ENCODE measurements at regions of chr12 and their contacts with region 1.

Region 1: GRCh38 chr12:31682136-31682962 is 22.9 kb downstream of the ETFBKMT start:
- DNase-seq: peak; percentile 59 to 81 (median 71)
- H3K4me3 ChIP-seq: no peak overlapping the region
- H3K27ac ChIP-seq: no peak overlapping the region
- H3K4me1 ChIP-seq: no peaks in the 10 kb centered on the region
- H3K27me3 ChIP-seq: no peaks in the 10 kb centered on the region
- CTCF ChIP-seq: peak; percentile 26 to 87 (median 72)
- POLR2A ChIP-seq: no peak

Region 2: GRCh38 chr12:31578632-31579031 is 103.7 kb before region 1 on chr12:
- intact Hi-C with region 1: no loop called
- DNase-seq: peak; percentile 39 to 80 (median 72)
- H3K4me3 ChIP-seq: no peak overlapping the region
- H3K27ac ChIP-seq: peak overlapping the region in 2 of 5 donors; percentile 1 to 29
- H3K4me1 ChIP-seq: peaks cover 0 to 25% of the 10 kb centered on the region in 2 donors
- H3K27me3 ChIP-seq: no peaks in the 10 kb centered on the region
- CTCF ChIP-seq: no peak
- POLR2A ChIP-seq: no peak

Region 3: GRCh38 chr12:31618228-31619025 is 63.9 kb before region 1 on chr12:
- intact Hi-C with region 1: no loop called
- DNase-seq: peak in 3 of 7 donors; percentile 12 to 31 (median 25)
- H3K4me3 ChIP-seq: no peak overlapping the region
- H3K27ac ChIP-seq: peak overlapping the region in 1 of 5 donors; percentile 32
- H3K4me1 ChIP-seq: no peaks in the 10 kb centered on the region
- H3K27me3 ChIP-seq: no peaks in the 10 kb centered on the region
- CTCF ChIP-seq: no peak
- POLR2A ChIP-seq: no peak

Region 4: DNA sequence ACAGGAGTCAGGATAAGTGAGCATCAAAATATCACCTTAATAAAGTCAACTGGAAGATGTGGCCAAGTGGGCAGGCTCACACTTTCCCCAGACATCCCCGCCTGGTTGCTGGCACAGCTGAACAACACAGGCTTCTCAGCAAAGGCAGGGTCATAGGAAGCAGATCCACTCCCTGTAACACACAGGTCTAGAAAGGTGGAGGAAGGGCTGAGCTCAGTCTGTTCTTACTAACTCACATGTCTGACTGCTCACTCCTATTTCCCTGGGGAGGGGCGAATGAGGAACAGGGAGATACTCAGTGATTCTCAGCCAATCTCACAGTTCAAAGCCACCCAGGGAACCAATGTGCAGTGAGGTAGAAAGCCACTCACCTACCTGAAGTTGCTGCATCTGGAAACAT is 91.5 kb after region 1 on chr12:
- intact Hi-C with region 1: loop called in 1 of 2 experiments (anchors 10 kb)
- DNase-seq: no peak
- H3K4me3 ChIP-seq: no peak overlapping the region
- H3K27ac ChIP-seq: no peak overlapping the region
- H3K4me1 ChIP-seq: peaks cover 0 to 7% of the 10 kb centered on the region in 2 donors
- H3K27me3 ChIP-seq: no peaks in the 10 kb centered on the region
- CTCF ChIP-seq: no peak
- POLR2A ChIP-seq: no peak

Region 5: DNA sequence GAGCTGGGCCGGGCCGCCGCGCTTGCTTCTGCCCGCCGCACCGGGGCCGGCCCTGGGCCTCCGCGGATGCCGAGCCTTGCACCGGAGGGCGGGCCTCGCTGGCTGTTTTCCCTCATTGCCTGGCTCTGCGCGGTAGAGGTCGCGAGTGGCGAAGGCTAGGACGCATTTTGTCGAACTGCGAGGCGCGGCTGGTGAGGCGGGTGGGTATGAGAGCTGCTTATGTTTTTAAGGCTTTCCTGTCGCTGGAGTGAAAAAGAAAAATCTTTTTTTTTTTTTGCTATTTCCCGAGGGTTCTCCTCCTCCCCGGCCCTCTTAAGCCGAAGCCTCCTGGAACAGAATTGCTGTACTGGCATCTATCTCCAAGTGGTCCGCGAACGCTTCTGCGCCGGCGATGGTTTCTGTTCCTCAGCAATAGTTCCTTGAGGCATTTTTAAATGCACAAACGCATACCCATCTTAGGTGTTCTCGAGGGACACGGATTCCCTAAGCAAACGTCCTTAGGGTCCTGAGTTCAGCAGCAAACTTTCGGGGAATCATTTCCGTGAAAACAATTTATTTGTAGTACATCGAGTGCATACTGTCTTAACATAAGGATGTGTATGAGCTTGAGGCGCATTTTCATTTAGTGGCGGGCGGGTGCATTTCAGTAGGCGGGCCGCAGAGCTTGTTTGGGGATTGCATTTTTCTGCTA is 277.5 kb after region 1 on chr12:
- intact Hi-C with region 1: loop called in 1 of 2 experiments (anchors 10 kb)
- DNase-seq: peak; percentile 57 to 77 (median 66)
- H3K4me3 ChIP-seq: peak overlapping the region in 3 of 4 donors; percentile 30 to 92 (median 92)
- H3K27ac ChIP-seq: peak overlapping the region in 4 of 5 donors; percentile 75 to 96 (median 93)
- H3K4me1 ChIP-seq: peaks cover 5 to 34% of the 10 kb centered on the region in 2 donors
- H3K27me3 ChIP-seq: no peaks in the 10 kb centered on the region
- CTCF ChIP-seq: no peak
- POLR2A ChIP-seq: no peak

Measured in adrenal gland (tissue), 19 donors.